SK-N-SH (cell line): ENCODE measurements at regions of chr4 and their contacts with region 1.

Region 1: DNA sequence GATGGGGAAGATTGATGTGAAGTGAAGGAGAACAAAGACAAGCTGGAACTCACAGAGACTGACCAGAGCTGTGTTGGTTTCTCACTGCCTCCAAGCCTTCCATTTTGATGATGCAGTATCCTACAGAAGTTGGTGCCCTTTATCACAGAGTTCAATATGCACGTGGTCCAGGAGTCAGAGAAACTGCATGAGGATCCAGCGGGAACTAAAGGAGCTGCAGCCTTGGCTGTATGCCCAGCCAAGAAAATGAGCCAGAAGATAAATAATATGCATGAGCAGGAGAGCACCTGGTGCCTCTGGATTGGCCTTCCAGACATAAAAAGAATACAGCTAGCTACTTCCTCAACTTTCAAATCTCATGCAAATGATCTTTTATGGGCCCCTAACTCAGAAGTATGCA is 44.3 kb upstream of the DCLK2 start:
- DNase-seq: no peak
- H3K4me3 ChIP-seq: no peak overlapping the region
- H3K27ac ChIP-seq: no peak overlapping the region
- H3K4me1 ChIP-seq: peaks cover 0 to 3% of the 10 kb centered on the region in 2 experiments; a peak in 1 of 4 replicates
- H3K27me3 ChIP-seq: no peaks in the 10 kb centered on the region
- CTCF ChIP-seq: no peak
- EP300 ChIP-seq: no peak
- RAD21 ChIP-seq: no peak

Region 2: DNA sequence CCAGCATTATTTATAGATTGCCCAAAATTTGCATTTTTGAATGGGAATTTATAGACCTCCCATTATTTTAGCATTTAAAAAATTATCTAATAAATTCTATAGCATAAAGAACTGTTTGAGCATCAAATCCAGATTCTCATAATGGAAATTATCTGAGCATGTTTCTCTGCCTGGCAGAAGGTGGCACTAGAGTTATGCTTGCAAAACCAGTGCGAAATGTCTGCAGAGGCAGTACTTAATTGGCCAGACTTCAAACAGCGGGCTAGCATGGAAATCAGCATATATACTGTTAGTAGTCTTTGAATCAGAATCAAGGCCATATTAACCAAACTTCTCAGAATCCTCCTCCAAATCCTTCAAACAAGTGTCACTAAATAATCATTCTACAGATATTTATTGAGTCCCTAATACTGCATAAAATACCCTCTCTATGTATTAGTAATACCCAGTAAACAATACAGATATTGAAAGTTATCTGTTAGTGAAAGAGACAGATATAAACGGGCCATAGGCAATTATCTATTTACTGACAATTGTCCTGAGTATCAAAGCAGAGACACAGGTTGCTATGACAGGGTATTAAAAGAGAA is 34.3 kb before region 1 on chr4:
- CTCF ChIA-PET with region 1: no interaction called
- POLR2A ChIA-PET with region 1: no interaction called
- DNase-seq: peak; percentile 34
- H3K4me3 ChIP-seq: no peak overlapping the region; a peak in 1 of 4 replicates
- H3K27ac ChIP-seq: no peak overlapping the region
- H3K4me1 ChIP-seq: peaks cover 6 to 31% of the 10 kb centered on the region in 2 experiments; a peak in 3 of 4 replicates
- H3K27me3 ChIP-seq: no peaks in the 10 kb centered on the region
- CTCF ChIP-seq: peak; percentile 96
- EP300 ChIP-seq: 0 out of 4 replicates have a peak, but pooled peaks of 1 of the 2 experiments have one; percentile 6
- RAD21 ChIP-seq: peak; percentile 98

Region 3: DNA sequence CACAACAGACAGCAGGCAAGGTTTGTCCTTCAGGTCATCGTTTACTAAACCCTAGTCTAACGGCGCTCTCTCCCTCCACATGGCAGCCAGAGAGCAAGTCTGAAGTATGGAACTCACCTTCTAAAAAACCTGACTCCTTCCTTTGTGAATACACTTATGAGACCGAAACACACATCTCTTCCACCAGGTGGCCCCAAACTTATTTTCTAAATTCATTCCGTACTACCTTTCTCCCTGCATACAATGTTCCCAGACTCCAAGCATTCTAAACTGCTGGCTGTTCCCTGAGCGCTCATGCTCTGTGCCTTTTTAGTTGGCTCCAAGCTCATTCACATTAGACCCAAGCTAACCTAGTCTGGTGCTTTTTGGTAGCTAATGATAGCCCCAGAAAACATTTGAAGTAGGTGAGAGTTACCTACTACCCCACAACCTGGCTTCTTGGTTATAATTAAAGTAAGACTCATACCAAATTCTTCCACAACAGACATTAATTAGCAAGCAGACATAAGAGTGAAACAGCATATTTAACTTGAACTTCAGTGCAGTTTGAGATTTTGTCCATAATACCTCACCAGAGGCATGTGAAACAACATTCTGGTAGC is 23.3 kb before region 1 on chr4:
- CTCF ChIA-PET with region 1: interaction called, 10 read pairs
- POLR2A ChIA-PET with region 1: no interaction called
- DNase-seq: peak; percentile 23
- H3K4me3 ChIP-seq: no peak overlapping the region
- H3K27ac ChIP-seq: no peak overlapping the region; a peak in 1 of 4 replicates
- H3K4me1 ChIP-seq: peaks cover 6 to 24% of the 10 kb centered on the region in 2 experiments
- H3K27me3 ChIP-seq: no peaks in the 10 kb centered on the region
- CTCF ChIP-seq: peak; percentile 71
- EP300 ChIP-seq: no peak
- RAD21 ChIP-seq: peak; percentile 83